ENCODE measurements at regions of chr15 and their contacts with region 1.

Region 1: GRCh38 chr15:43070893-43071292 is 34.9 kb downstream of the UBR1 start:
- DNase-seq: no peak
- ATAC-seq: no peak
- H3K4me3 ChIP-seq: no peak overlapping the region
- H3K27ac ChIP-seq: no peak overlapping the region
- H3K4me1 ChIP-seq: no peaks in the 10 kb centered on the region
- H3K27me3 ChIP-seq: no peaks in the 10 kb centered on the region

Region 2: GRCh38 chr15:43042885-43043284 is 28.0 kb before region 1 on chr15:
- intact Hi-C with region 1: loop called in 1 of 4 experiments (anchors 5 kb)
- DNase-seq: no peak
- ATAC-seq: no peak
- H3K4me3 ChIP-seq: no peak overlapping the region
- H3K27ac ChIP-seq: no peak overlapping the region
- H3K4me1 ChIP-seq: no peaks in the 10 kb centered on the region
- H3K27me3 ChIP-seq: no peaks in the 10 kb centered on the region